ENCODE measurements at regions of chrX and their contacts with region 1.

Region 1: DNA sequence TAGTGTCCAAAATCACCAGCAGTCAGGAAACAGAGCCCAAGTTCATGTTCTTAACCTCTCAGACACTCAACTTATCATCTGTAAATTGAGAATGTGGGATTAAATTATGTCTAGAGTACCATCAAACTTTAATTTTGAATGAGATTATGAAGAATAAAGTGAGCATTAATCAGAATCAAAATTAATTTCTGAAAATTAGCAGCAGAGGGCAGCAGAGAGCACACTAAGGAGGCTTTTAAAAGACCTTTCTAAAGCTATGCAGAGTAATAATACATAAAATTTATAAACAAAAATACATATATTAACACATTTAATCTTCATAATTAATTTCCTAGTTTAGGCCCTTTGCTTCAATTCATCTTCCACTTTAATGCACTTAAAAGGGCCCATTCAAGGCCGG is 7.1 kb downstream of the TASL start:
- DNase-seq: no peak
- ATAC-seq: no peak

Region 2: DNA sequence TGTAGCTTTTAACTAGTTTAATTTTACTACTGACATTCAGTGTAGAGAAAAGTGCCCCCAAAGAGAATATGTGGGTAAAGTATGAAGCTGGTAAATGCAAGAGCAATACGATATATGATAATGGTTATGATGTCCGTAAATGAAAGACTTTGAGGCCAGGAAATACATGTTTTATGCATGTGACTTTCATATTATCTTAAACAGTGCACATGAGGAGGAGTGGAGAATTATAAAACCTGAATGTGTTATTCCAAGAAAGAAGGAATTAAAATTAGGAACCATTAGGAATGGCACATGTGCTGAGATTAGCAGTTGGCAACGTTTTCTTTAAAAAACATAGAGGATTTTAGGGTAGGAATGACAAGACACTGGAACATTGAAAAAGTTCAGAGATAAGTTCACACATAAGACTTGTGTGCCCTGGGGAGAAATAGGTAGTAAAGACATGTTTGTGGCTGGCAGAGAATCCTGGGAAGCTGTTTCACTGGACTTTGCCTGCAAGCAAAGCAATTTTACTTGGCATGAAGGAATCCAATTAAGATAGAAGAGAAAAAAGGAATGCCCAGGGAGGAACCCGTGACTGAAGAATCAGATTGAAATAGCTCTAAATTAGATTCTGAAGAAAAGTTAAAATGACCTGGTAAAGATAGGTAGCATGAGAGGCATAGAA is 102.8 kb after region 1 on chrX:
- intact Hi-C with region 1: loop called (anchors 5 kb)
- DNase-seq: no peak
- ATAC-seq: no peak

Region 3: GRCh38 chrX:30706216-30706775 is 135.8 kb after region 1 on chrX:
- intact Hi-C with region 1: loop called (anchors 5 kb)
- DNase-seq: no peak
- ATAC-seq: no peak

Region 4: GRCh38 chrX:30900227-30900626 is 329.7 kb after region 1 on chrX:
- intact Hi-C with region 1: no loop called
- DNase-seq: no peak
- ATAC-seq: no peak

Measured in Right ventricle myocardium inferior (tissue), 1 donor.